ENCODE measurements at regions of chr4 and their contacts with region 1.

Region 1: GRCh38 chr4:14920759-14921320 is 81.4 kb upstream of the CPEB2 start:
- DNase-seq: peak in 5 of 9 donors; percentile 12 to 62 (median 37)
- ATAC-seq: no peak
- H3K4me3 ChIP-seq: no peak overlapping the region
- H3K4me3 Mint-ChIP-seq: no peak overlapping the region
- H3K27ac ChIP-seq: no peak overlapping the region
- H3K27ac Mint-ChIP-seq: no peak overlapping the region
- H3K4me1 ChIP-seq: no peaks in the 10 kb centered on the region
- H3K4me1 Mint-ChIP-seq: peaks cover 0 to under 1% (median 0%) of the 10 kb centered on the region in 7 donors
- H3K27me3 ChIP-seq: no peaks in the 10 kb centered on the region
- H3K27me3 Mint-ChIP-seq: peaks cover 0 to 17% (median 11%) of the 10 kb centered on the region in 5 donors

Region 2: DNA sequence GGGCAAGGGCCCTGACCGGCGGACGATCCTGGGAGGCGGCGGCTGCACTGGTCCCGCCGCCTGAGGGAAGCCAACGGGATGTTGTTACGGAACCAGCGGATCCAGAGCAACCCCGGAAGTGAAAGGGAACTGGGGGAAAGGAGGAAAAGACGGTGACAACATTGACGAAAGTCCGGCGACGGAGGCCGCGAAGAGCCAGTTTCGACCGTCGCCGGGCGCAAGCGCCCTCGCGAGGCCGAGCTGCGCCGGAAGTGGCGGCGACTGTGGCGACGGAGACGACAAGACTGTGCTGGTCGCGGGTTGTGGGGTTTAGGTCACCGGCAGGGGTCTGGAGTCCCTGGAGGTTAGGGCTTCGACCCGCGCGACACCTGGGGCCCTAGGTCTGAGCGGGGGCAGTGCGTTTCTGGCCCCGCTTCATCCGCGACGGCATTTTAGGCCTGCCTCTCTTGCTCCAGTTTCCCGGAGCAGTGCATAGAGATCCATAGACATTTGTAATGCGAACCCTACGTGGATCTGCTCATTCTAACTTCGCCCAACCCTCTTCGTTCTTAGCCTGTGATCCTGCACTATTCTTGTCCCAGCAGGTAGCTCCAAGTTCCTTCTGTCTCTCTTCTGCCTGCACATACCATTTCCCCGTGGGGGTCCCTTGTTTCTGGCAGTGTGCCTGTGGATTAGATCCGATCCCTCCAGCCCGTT is 1293.1 kb before region 1 on chr4 and contains the start of gene BOD1L1:
- CTCF ChIA-PET with region 1: no interaction called
- POLR2A ChIA-PET with region 1: no interaction called
- intact Hi-C with region 1: loop called in 1 of 2 experiments (anchors 10 kb)
- DNase-seq: peak; percentile 63 to 86 (median 75)
- ATAC-seq: peak; percentile 88
- H3K4me3 ChIP-seq: peak within 1 kb of the TSS; percentile 96
- H3K4me3 Mint-ChIP-seq: peak within 1 kb of the TSS; percentile 83 to 100 (median 97)
- H3K27ac ChIP-seq: peak within 1 kb of the TSS; percentile 87
- H3K27ac Mint-ChIP-seq: peak within 1 kb of the TSS; percentile 94 to 100 (median 98)
- H3K4me1 ChIP-seq: peaks cover 17 to 24% of the 10 kb centered on the region in 2 donors
- H3K4me1 Mint-ChIP-seq: peaks cover 26 to 55% (median 51%) of the 10 kb centered on the region in 7 donors
- H3K27me3 ChIP-seq: no peaks in the 10 kb centered on the region
- H3K27me3 Mint-ChIP-seq: no peaks in the 10 kb centered on the region
- total RNA-seq, gene BOD1L1: 44.5 to 76.7 (median 54.2) TPM

Region 3: DNA sequence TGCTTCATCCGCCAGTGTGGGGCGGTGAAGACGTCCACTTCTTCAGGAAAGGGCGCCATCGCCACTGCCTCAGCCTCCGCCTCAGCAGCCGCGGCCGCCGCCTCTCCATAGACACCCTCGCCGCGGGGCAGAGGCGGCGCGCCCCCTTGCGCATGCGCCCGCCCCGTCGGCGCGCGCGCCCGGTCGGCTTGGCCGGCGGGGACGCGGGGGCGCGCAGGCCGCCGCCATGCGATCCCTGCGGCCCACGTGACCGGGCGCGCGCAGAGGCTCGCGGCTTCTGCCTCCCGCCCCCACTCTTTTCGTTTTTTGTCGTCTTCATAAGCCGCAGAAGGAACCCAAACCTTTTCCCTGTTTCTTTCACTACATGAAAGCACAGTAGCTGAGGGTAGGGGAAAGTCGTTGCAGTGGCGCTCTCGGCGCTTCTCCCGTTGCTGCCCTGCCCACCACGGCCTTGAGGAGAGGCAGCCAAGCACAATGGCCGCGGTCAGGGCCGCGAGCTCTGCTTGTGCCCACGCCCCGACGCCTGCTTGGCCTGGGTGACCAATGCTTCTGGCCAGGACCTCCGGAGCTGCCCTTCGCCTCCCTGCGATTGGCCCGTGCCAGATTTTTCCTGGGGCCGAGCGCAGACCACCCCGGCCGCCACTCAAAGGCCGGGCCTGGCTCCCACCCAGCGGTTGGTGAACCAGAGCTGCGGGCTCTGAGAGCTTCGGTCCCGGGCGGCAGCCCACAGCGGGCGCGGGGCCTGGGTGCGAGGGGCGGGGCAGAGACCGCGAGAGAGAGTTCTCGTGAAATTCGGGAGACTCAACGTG is 734.6 kb after region 1 on chr4 and contains the start of gene FBXL5:
- CTCF ChIA-PET with region 1: no interaction called
- POLR2A ChIA-PET with region 1: interaction called, 3 read pairs
- intact Hi-C with region 1: loop called in 1 of 2 experiments (anchors 10 kb)
- DNase-seq: peak; percentile 77 to 92 (median 87)
- ATAC-seq: peak; percentile 92
- H3K4me3 ChIP-seq: peak within 1 kb of the TSS; percentile 87
- H3K4me3 Mint-ChIP-seq: peak within 1 kb of the TSS; percentile 94 to 100 (median 97)
- H3K27ac ChIP-seq: peak within 1 kb of the TSS; percentile 90
- H3K27ac Mint-ChIP-seq: peak within 1 kb of the TSS; percentile 90 to 98 (median 98)
- H3K4me1 ChIP-seq: peaks cover 29% of the 10 kb centered on the region in 2 donors
- H3K4me1 Mint-ChIP-seq: peaks cover 21 to 49% (median 45%) of the 10 kb centered on the region in 7 donors
- H3K27me3 ChIP-seq: no peaks in the 10 kb centered on the region
- H3K27me3 Mint-ChIP-seq: peaks cover 0 to 2% (median 0%) of the 10 kb centered on the region in 5 donors
- total RNA-seq, gene FBXL5: 39.1 to 107 (median 57.4) TPM